ENCODE measurements at regions of chr3 and their contacts with region 1.

Region 1: DNA sequence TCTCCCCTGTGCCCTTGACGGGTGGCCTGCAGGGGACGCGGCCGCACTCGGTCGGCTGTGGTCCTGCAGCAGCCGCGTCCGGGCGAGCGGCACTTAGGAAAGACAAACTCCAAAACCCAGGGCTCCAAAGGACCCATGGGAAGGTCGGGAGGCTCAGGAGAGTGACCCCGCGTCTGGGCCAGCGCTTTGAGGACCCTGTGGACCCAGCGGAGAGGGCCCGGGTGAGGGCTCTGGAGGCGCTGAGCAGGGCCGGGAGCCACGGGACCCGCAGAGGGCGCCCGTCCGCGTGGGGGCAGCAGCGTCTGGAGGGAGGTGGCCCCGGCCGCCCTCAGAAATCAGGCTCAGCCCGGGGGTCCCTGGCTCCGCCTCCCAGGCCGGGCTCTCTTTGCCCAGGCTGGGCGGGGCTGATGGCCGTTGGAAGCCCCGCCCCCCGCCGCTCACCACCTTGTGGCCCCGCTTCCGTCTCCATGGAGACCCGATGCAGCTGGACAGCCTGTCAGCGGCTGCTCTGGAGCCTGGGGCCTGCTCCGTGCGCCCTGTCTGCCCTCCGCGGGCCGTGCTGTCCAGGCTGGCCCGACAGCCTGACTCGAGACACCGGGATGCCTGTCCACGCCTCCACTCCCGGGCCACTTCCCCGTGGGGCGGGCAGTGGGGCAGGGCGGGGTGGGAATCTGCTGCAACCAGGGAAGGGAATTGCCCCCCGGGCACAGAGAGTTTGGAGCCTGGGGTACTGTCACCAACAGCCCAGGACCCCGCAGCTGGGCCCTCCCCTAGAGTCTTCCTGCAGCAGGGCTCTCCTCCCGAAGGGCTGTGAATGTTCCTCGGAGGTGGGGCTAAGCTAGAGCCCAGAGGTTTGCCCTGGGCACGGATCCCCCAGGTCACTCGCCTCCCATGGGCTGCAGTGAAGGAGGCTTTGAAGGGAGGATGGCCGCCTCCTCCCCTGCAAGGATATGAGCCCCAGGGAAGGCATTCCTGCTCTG is 34.8 kb upstream of the RPL32 start:
- DNase-seq: peak; percentile 87
- ATAC-seq: peak; percentile 95
- H3K4me3 Mint-ChIP-seq: peak overlapping the region; percentile 74
- H3K27ac Mint-ChIP-seq: no peak overlapping the region
- H3K4me1 Mint-ChIP-seq: peaks cover 6% of the 10 kb centered on the region
- H3K27me3 Mint-ChIP-seq: peaks cover 51% of the 10 kb centered on the region
- CTCF ChIP-seq: no peak; the same call in 1 of the 2 replicates

Region 2: GRCh38 chr3:12853191-12853741 is 22.9 kb before region 1 on chr3:
- CTCF ChIA-PET with region 1: interaction called, 11 read pairs
- POLR2A ChIA-PET with region 1: no interaction called
- DNase-seq: no peak
- ATAC-seq: no peak
- H3K4me3 Mint-ChIP-seq: no peak overlapping the region
- H3K27ac Mint-ChIP-seq: no peak overlapping the region
- H3K4me1 Mint-ChIP-seq: 0 out of 2 replicates have a peak, but pooled peaks cover 3% of the 10 kb centered on the region
- H3K27me3 Mint-ChIP-seq: peaks cover 25% of the 10 kb centered on the region
- CTCF ChIP-seq: no peak

Region 3: GRCh38 chr3:12891985-12892839 is 16.1 kb after region 1 on chr3:
- CTCF ChIA-PET with region 1: interaction called, 57 read pairs
- POLR2A ChIA-PET with region 1: no interaction called
- DNase-seq: peak; percentile 50
- ATAC-seq: peak; percentile 54
- H3K4me3 Mint-ChIP-seq: no peak overlapping the region
- H3K27ac Mint-ChIP-seq: no peak overlapping the region
- H3K4me1 Mint-ChIP-seq: peaks cover 6% of the 10 kb centered on the region; the same call in 1 of the 2 replicates
- H3K27me3 Mint-ChIP-seq: peaks cover 47% of the 10 kb centered on the region
- CTCF ChIP-seq: peak; percentile 77

Region 4: GRCh38 chr3:12905316-12906071 is 29.3 kb after region 1 on chr3:
- CTCF ChIA-PET with region 1: no interaction called
- POLR2A ChIA-PET with region 1: no interaction called
- DNase-seq: no peak
- ATAC-seq: no peak
- H3K4me3 Mint-ChIP-seq: no peak overlapping the region
- H3K27ac Mint-ChIP-seq: no peak overlapping the region
- H3K4me1 Mint-ChIP-seq: peaks cover 5% of the 10 kb centered on the region
- H3K27me3 Mint-ChIP-seq: no peaks in the 10 kb centered on the region
- CTCF ChIP-seq: no peak

Measured in WTC11 (cell line).